ENCODE measurements at regions of chr12 and their contacts with region 1.

Region 1: DNA sequence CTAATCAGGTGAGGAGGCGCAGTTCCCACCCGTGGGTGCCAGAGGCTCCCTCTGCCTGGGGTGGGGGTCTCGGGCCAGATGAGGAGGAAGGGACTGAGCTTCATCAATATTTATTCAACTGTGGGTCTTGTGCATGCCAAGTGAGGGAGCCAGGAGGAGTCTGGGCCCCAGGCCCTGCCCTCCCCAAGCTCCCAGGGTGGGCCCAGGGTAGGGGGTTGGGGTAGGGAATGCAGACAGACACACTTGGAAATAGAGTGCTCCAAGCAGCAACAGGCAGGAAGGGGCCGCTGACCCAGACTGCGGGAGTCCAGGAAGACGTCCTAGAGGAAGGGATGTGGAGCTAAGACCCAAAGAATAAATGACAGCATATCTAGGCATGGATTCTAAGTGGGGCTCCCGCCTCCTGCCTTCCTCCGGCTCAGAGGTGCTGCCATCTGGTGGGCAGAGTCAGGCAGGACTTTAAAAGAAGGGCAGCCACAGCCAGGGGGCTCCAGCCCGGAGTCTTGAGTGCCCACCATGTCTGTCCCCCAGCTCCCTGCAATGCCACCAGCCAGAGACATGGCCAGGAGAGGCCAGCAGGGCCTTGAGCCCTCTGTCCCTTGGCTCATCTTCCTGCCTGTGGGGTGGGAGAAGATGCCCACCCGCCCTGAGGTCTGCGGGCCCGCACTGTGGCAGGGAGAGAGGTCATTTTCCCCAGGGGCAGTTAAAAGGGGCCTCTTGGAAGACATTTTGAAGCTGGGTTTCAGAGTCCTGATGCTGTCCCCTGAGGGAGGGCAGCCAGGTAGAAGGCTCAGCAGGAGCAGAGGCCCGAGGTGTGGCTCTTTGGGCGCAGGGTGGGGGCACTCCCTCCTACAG is 70.1 kb downstream of the PHETA1 start:
- DNase-seq: peak; percentile 41 to 87
- H3K4me3 ChIP-seq: no peak overlapping the region
- H3K27ac ChIP-seq: 0 out of 2 replicates have a peak overlapping the region, but pooled peaks have one; percentile 34
- H3K4me1 ChIP-seq: peaks cover 0 to 7% (median 6%) of the 10 kb centered on the region in 4 experiments; a peak in 6 of 7 replicates
- H3K27me3 ChIP-seq: no peaks in the 10 kb centered on the region
- CTCF ChIP-seq: peak; percentile 91 to 99 (median 95)
- EP300 ChIP-seq: no peak
- POLR2A ChIP-seq: no peak
- RAD21 ChIP-seq: peak; percentile 67 to 79

Region 2: DNA sequence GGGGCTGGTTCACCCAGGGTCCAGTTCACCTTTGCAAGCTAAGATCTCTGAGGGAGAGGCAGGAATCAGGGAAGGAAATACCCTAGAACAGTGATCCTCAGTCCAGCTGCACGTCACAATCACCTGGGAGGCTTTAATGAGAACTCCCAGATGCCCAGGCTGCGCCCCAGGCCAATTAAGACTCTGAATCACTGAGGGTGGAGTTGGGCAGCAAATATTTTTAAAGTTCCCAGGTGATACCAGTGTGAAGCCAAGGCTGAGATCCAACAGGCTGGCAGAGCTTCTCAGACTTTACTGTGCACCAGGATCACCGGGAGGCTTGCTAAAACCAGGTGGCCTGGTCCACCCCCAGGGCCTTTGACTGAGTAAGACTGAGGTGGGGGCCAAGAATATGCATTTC is 402.2 kb before region 1 on chr12:
- CTCF ChIA-PET with region 1: interaction called, 15 read pairs
- POLR2A ChIA-PET with region 1: no interaction called
- DNase-seq: no peak
- H3K4me3 ChIP-seq: no peak overlapping the region
- H3K27ac ChIP-seq: no peak overlapping the region
- H3K4me1 ChIP-seq: peaks cover 0 to 3% (median under 1%) of the 10 kb centered on the region in 4 experiments; a peak in 3 of 7 replicates
- H3K27me3 ChIP-seq: no peaks in the 10 kb centered on the region
- CTCF ChIP-seq: no peak
- EP300 ChIP-seq: no peak
- POLR2A ChIP-seq: no peak
- RAD21 ChIP-seq: no peak

Region 3: GRCh38 chr12:111046896-111047295 is 251.9 kb before region 1 on chr12:
- CTCF ChIA-PET with region 1: interaction called, 10 read pairs
- POLR2A ChIA-PET with region 1: no interaction called
- DNase-seq: no peak
- H3K4me3 ChIP-seq: no peak overlapping the region
- H3K27ac ChIP-seq: no peak overlapping the region
- H3K4me1 ChIP-seq: peaks cover 0 to 3% (median 0%) of the 10 kb centered on the region in 4 experiments; a peak in 2 of 7 replicates
- H3K27me3 ChIP-seq: no peaks in the 10 kb centered on the region
- CTCF ChIP-seq: no peak
- EP300 ChIP-seq: no peak
- POLR2A ChIP-seq: no peak
- RAD21 ChIP-seq: no peak; a peak in 1 of 4 replicates

Region 4: GRCh38 chr12:111261911-111262676 is 36.7 kb before region 1 on chr12:
- CTCF ChIA-PET with region 1: interaction called, 285 read pairs
- POLR2A ChIA-PET with region 1: no interaction called
- DNase-seq: no peak
- H3K4me3 ChIP-seq: no peak overlapping the region
- H3K27ac ChIP-seq: no peak overlapping the region
- H3K4me1 ChIP-seq: no peaks in the 10 kb centered on the region
- H3K27me3 ChIP-seq: no peaks in the 10 kb centered on the region
- CTCF ChIP-seq: no peak
- EP300 ChIP-seq: no peak
- POLR2A ChIP-seq: no peak
- RAD21 ChIP-seq: no peak

Region 5: DNA sequence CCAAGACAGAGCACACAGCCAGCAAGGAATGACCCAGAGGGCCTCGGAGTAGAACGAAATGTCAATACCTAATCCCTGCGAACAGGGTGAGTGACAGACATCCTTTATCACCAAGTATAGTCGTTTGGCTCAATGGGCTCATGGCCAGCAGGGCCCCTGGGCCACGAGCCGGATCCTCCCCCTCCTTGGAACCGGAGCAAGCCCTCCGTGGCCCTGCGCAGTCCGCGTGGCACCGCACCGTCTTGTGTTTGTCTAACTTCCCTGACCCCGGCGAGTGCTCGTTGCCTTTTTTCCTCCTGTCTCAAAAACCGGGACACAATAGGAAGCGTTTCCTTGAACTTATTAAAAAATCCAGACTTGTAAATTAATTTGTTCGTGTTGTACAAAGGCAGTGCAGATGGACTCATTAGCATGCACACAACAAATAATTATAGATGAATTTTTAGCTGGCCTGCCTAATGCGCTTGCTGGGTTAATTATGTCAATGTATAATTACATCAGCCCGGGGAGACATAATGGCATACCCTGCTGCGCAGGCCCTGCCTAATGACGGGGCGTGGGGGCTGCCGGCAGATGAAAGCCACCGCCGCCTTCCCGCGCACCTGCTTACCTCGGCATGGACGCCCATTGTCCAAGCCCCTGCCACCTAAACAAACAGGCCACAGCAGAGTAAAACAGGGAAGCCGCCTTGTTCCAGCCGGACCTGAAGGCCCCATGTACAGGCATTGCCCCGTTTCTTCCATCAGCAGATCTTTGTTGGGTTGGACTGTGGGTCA is 11.5 kb before region 1 on chr12:
- CTCF ChIA-PET with region 1: interaction called, 285 read pairs
- POLR2A ChIA-PET with region 1: interaction called, 4 read pairs
- DNase-seq: no peak
- H3K4me3 ChIP-seq: no peak overlapping the region
- H3K27ac ChIP-seq: no peak overlapping the region
- H3K4me1 ChIP-seq: peaks cover 8 to 9% (median 8%) of the 10 kb centered on the region in 4 experiments
- H3K27me3 ChIP-seq: no peaks in the 10 kb centered on the region
- CTCF ChIP-seq: no peak
- EP300 ChIP-seq: no peak
- POLR2A ChIP-seq: no peak
- RAD21 ChIP-seq: no peak

Region 6: GRCh38 chr12:111322336-111323250 is 23.8 kb after region 1 on chr12:
- CTCF ChIA-PET with region 1: interaction called, 13 read pairs
- POLR2A ChIA-PET with region 1: no interaction called
- DNase-seq: no peak
- H3K4me3 ChIP-seq: no peak overlapping the region
- H3K27ac ChIP-seq: no peak overlapping the region
- H3K4me1 ChIP-seq: no peaks in the 10 kb centered on the region
- H3K27me3 ChIP-seq: no peaks in the 10 kb centered on the region
- CTCF ChIP-seq: no peak
- EP300 ChIP-seq: no peak
- POLR2A ChIP-seq: no peak
- RAD21 ChIP-seq: no peak